ENCODE measurements at regions of chr18 and their contacts with region 1.

Region 1: GRCh38 chr18:12726774-12727550 is 24.1 kb downstream of the PSMG2 start:
- DNase-seq: peak; percentile 27 to 77 (median 57)
- ATAC-seq: peak; percentile 89
- H3K4me3 ChIP-seq: no peak overlapping the region
- H3K4me3 Mint-ChIP-seq: no peak overlapping the region
- H3K27ac ChIP-seq: no peak overlapping the region
- H3K27ac Mint-ChIP-seq: peak overlapping the region; percentile 20
- H3K4me1 ChIP-seq: no peaks in the 10 kb centered on the region
- H3K4me1 Mint-ChIP-seq: no peaks in the 10 kb centered on the region
- H3K27me3 ChIP-seq: no peaks in the 10 kb centered on the region
- H3K27me3 Mint-ChIP-seq: no peaks in the 10 kb centered on the region
- CTCF ChIP-seq: peak; percentile 90

Region 2: GRCh38 chr18:10878703-10879102 is 1848.3 kb before region 1 on chr18:
- CTCF ChIA-PET with region 1: no interaction called
- POLR2A ChIA-PET with region 1: no interaction called
- intact Hi-C with region 1: no loop called
- DNase-seq: no peak
- ATAC-seq: no peak
- H3K4me3 ChIP-seq: no peak overlapping the region
- H3K4me3 Mint-ChIP-seq: no peak overlapping the region
- H3K27ac ChIP-seq: no peak overlapping the region
- H3K27ac Mint-ChIP-seq: no peak overlapping the region
- H3K4me1 ChIP-seq: no peaks in the 10 kb centered on the region
- H3K4me1 Mint-ChIP-seq: no peaks in the 10 kb centered on the region
- H3K27me3 ChIP-seq: no peaks in the 10 kb centered on the region
- H3K27me3 Mint-ChIP-seq: no peaks in the 10 kb centered on the region
- CTCF ChIP-seq: no peak

Region 3: DNA sequence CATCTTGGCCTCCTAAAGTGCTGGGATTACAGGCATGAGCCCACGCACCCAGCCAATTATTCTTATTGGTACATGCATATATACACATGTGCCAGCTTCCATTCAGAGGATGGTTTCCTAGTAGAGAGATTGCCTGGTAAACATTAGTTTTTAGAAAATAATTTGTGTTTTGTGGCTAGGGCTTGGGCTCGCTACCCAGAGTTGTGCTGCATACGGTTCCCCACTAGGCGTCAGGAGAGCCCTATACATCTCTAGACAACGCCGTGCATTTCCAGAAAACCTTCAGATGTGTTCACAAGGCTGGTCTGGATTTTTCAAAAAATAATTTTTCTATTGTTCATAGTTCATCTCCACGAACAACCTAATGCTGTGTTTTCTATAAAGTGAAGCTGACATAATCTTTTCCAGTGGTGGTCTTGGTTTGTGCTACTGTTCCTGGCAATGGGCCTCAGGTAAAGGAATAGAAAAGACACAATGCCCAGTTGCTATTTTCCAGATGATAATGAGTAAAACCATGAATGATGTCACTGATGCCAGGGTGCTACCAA is 335.3 kb before region 1 on chr18:
- CTCF ChIA-PET with region 1: interaction called, 8 read pairs
- POLR2A ChIA-PET with region 1: no interaction called
- intact Hi-C with region 1: loop called in 1 of 2 experiments (anchors 5 kb)
- DNase-seq: peak in 8 of 9 experiments; percentile 28 to 74 (median 56)
- ATAC-seq: peak; percentile 99
- H3K4me3 ChIP-seq: no peak overlapping the region
- H3K4me3 Mint-ChIP-seq: no peak overlapping the region
- H3K27ac ChIP-seq: no peak overlapping the region
- H3K27ac Mint-ChIP-seq: no peak overlapping the region
- H3K4me1 ChIP-seq: no peaks in the 10 kb centered on the region
- H3K4me1 Mint-ChIP-seq: no peaks in the 10 kb centered on the region
- H3K27me3 ChIP-seq: no peaks in the 10 kb centered on the region
- H3K27me3 Mint-ChIP-seq: peaks cover 15% of the 10 kb centered on the region
- CTCF ChIP-seq: peak; percentile 78

Region 4: GRCh38 chr18:12574494-12575185 is 152.3 kb before region 1 on chr18:
- CTCF ChIA-PET with region 1: no interaction called
- POLR2A ChIA-PET with region 1: no interaction called
- intact Hi-C with region 1: no loop called
- DNase-seq: no peak
- ATAC-seq: no peak
- H3K4me3 ChIP-seq: no peak overlapping the region
- H3K4me3 Mint-ChIP-seq: no peak overlapping the region
- H3K27ac ChIP-seq: no peak overlapping the region
- H3K27ac Mint-ChIP-seq: no peak overlapping the region
- H3K4me1 ChIP-seq: no peaks in the 10 kb centered on the region
- H3K4me1 Mint-ChIP-seq: no peaks in the 10 kb centered on the region
- H3K27me3 ChIP-seq: no peaks in the 10 kb centered on the region
- H3K27me3 Mint-ChIP-seq: peaks cover 2% of the 10 kb centered on the region
- CTCF ChIP-seq: no peak

Region 5: DNA sequence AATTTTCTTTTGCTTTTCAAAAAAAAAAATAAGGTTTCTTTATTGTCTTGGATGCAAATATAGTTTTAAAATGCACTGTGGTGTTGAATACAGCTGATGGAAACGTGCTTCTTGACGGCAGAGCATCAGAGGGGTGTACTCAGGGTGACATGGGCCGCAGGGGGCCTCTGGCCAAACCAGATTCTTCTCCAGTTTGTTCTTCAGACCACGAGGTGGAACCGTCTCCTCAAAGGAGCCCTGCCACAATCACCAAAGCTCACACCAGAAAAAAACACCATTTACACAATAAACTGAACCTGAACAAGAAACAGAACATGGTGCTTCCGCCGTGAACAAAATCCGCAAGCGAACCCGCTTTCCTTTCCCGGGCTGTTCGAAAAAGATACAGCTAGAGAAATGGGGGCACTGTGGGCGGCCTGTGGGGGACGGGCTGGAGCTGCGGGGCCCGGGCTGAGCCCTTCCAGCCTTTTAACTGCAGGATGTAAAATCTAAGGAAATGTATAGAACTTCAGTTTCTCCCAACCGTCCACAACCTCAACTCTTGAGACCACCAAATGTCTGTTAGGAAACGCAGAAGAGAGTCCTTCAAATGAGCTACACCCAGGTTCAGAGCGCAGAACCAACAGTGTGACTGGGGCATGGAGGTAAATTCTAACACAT is 10.4 kb after region 1 on chr18:
- CTCF ChIA-PET with region 1: interaction called, 12 read pairs
- POLR2A ChIA-PET with region 1: no interaction called
- intact Hi-C with region 1: no loop called
- DNase-seq: no peak
- ATAC-seq: no peak
- H3K4me3 ChIP-seq: no peak overlapping the region
- H3K4me3 Mint-ChIP-seq: no peak overlapping the region
- H3K27ac ChIP-seq: no peak overlapping the region
- H3K27ac Mint-ChIP-seq: no peak overlapping the region
- H3K4me1 ChIP-seq: no peaks in the 10 kb centered on the region
- H3K4me1 Mint-ChIP-seq: no peaks in the 10 kb centered on the region
- H3K27me3 ChIP-seq: no peaks in the 10 kb centered on the region
- H3K27me3 Mint-ChIP-seq: no peaks in the 10 kb centered on the region
- CTCF ChIP-seq: no peak

Region 6: GRCh38 chr18:12744103-12744502 is 17.1 kb after region 1 on chr18:
- CTCF ChIA-PET with region 1: interaction called, 19 read pairs
- POLR2A ChIA-PET with region 1: no interaction called
- intact Hi-C with region 1: no loop called
- DNase-seq: peak in 2 of 9 experiments; percentile 58 to 69
- ATAC-seq: peak; percentile 63
- H3K4me3 ChIP-seq: no peak overlapping the region
- H3K4me3 Mint-ChIP-seq: no peak overlapping the region
- H3K27ac ChIP-seq: no peak overlapping the region
- H3K27ac Mint-ChIP-seq: no peak overlapping the region
- H3K4me1 ChIP-seq: no peaks in the 10 kb centered on the region
- H3K4me1 Mint-ChIP-seq: peaks cover 4% of the 10 kb centered on the region
- H3K27me3 ChIP-seq: no peaks in the 10 kb centered on the region
- H3K27me3 Mint-ChIP-seq: no peaks in the 10 kb centered on the region
- CTCF ChIP-seq: peak; percentile 51

Region 7: DNA sequence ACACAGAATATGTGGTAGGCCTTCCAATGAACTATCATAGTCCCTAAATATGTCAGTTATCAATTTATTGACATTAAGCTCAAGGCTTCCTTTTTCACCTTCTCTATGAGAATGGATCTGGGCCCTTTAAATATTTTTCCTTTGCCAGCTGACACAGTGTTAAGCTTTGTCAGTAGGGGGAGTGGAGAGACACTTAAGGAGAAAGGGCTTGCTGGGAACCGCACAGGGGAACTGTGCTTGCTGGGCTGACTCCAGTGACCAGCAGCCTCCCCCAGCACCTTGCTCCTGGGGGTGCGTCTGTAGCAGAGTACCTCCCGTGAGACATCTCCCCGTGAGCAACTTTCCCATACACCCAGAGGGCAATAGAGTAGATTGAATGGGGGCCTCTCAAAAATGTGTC is 163.5 kb after region 1 on chr18:
- CTCF ChIA-PET with region 1: interaction called, 135 read pairs
- POLR2A ChIA-PET with region 1: no interaction called
- intact Hi-C with region 1: loop called (anchors 1 kb)
- DNase-seq: no peak
- ATAC-seq: no peak
- H3K4me3 ChIP-seq: no peak overlapping the region
- H3K4me3 Mint-ChIP-seq: no peak overlapping the region
- H3K27ac ChIP-seq: no peak overlapping the region
- H3K27ac Mint-ChIP-seq: no peak overlapping the region
- H3K4me1 ChIP-seq: no peaks in the 10 kb centered on the region
- H3K4me1 Mint-ChIP-seq: peaks cover 7% of the 10 kb centered on the region
- H3K27me3 ChIP-seq: peaks cover 0 to 6% of the 10 kb centered on the region in 2 experiments
- H3K27me3 Mint-ChIP-seq: peaks cover 12% of the 10 kb centered on the region
- CTCF ChIP-seq: no peak

Region 8: GRCh38 chr18:13159579-13159978 is 432.6 kb after region 1 on chr18:
- CTCF ChIA-PET with region 1: interaction called, 7 read pairs
- POLR2A ChIA-PET with region 1: no interaction called
- intact Hi-C with region 1: loop called (anchors 1 kb)
- DNase-seq: peak in 4 of 9 experiments; percentile 9 to 77 (median 57)
- ATAC-seq: peak; percentile 86
- H3K4me3 ChIP-seq: no peak overlapping the region
- H3K4me3 Mint-ChIP-seq: peak overlapping the region; percentile 20
- H3K27ac ChIP-seq: no peak overlapping the region
- H3K27ac Mint-ChIP-seq: no peak overlapping the region
- H3K4me1 ChIP-seq: no peaks in the 10 kb centered on the region
- H3K4me1 Mint-ChIP-seq: peaks cover 3% of the 10 kb centered on the region
- H3K27me3 ChIP-seq: peaks cover 0 to 2% of the 10 kb centered on the region in 2 experiments
- H3K27me3 Mint-ChIP-seq: no peaks in the 10 kb centered on the region
- CTCF ChIP-seq: peak; percentile 93

Measured in CD8-positive, alpha-beta T cell (primary cell).